ENCODE measurements at regions of chr20 and their contacts with region 1.

Region 1: DNA sequence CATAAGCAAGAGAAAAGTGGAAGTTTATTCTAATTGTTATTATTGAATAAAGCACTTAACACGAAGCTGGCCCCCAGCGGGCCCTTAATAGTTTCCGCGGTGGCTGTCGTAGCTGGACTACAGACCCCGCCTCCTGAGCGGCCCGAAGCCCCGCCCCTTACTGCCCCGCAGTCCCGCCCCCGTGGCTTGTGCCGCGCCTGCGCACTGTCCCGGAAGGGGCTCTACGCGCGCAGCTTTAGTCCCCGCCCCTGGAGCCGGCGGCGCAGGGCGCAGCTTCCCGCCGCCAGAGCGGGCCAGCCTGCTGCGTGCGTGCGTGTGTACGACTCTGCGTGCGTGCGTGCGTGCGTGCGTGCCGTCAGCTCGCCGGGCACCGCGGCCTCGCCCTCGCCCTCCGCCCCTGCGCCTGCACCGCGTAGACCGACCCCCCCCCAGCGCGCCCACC is at the start of gene VAPB:
- DNase-seq: peak; percentile 95
- H3K4me3 Mint-ChIP-seq: peak within 1 kb of the TSS; percentile 96
- H3K27ac Mint-ChIP-seq: peak within 1 kb of the TSS; percentile 97
- H3K4me1 Mint-ChIP-seq: peaks cover 35% of the 10 kb centered on the region
- H3K27me3 Mint-ChIP-seq: peaks cover 5% of the 10 kb centered on the region
- total RNA-seq, gene VAPB: 35.6 and 36.2 TPM in 2 replicates

Region 2: DNA sequence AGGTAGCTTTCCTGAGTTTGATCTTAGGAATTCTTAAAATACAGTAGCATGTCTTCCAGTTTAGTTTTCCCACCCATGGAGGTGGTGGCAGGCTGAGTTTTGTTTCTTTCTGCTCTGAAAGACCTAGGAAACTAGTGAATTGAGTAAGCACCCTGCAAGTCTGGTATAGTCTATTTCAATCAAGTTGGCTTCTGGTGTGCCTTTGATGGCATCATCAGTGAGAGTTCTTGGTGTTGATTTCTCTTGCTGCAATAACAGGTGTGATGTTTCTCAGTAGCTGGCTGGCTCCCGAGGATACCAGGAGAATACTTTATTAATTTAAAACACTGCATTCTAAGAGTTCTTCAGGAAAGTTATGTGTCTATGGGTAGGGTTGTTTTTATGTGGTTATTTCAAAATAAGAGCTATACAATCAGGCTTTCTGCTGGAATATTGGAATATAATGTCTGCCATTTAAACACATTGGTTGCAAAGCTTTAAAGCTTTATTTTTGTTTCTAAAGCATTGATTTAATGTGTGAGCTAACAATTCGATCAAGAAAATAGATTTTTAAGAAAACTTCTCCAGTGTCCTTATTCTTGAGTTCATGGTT is 19.2 kb after region 1 on chr20:
- intact Hi-C with region 1: loop called (anchors 2 kb)
- DNase-seq: no peak
- H3K4me3 Mint-ChIP-seq: no peak overlapping the region
- H3K27ac Mint-ChIP-seq: peak overlapping the region; percentile 64
- H3K4me1 Mint-ChIP-seq: peaks cover 32% of the 10 kb centered on the region
- H3K27me3 Mint-ChIP-seq: no peaks in the 10 kb centered on the region